ENCODE measurements at regions of chr11 and their contacts with region 1.

Region 1: GRCh38 chr11:11966826-11967668 is 41.4 kb downstream of the DKK3 start:
- DNase-seq: peak; percentile 88
- ATAC-seq: peak; percentile 96
- H3K4me3 Mint-ChIP-seq: no peak overlapping the region
- H3K27ac Mint-ChIP-seq: peak overlapping the region; percentile 20
- H3K4me1 Mint-ChIP-seq: peaks cover 8% of the 10 kb centered on the region
- H3K27me3 Mint-ChIP-seq: peaks cover 11% of the 10 kb centered on the region

Region 2: GRCh38 chr11:11860103-11860979 is 106.7 kb before region 1 on chr11:
- CTCF ChIA-PET with region 1: no interaction called
- POLR2A ChIA-PET with region 1: no interaction called
- DNase-seq: no peak
- ATAC-seq: no peak
- H3K4me3 Mint-ChIP-seq: no peak overlapping the region
- H3K27ac Mint-ChIP-seq: no peak overlapping the region
- H3K4me1 Mint-ChIP-seq: peaks cover 39% of the 10 kb centered on the region
- H3K27me3 Mint-ChIP-seq: no peaks in the 10 kb centered on the region

Region 3: DNA sequence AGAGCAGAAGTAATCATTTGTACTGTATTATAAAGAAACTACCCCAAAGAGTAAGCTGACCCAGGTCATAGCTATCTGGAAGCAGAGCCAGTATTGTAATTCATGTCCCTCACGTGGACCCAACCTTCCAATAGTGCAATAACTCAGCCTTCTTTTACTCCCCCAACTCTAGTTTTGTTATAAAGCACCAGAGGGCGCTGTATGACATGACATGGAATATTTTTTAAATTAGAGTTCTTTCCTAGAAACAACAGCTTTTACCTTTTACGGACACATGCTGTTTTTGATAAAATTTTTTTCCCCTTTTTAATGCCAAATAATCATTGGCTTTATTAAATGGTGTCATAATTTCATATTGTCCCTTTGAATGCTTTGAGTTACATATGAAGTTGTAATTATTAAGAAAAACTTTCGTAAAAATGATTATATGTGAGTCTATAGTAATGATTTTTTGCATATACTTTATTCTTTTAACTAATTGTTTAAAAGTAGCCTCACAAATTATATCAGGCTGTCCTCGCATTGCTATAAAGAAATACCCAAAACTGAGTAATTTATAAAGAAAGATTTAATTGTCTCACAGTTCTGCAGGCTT is 35.5 kb before region 1 on chr11:
- CTCF ChIA-PET with region 1: interaction called, 14 read pairs
- POLR2A ChIA-PET with region 1: no interaction called
- DNase-seq: peak; percentile 27
- ATAC-seq: peak; percentile 49
- H3K4me3 Mint-ChIP-seq: no peak overlapping the region
- H3K27ac Mint-ChIP-seq: no peak overlapping the region
- H3K4me1 Mint-ChIP-seq: peaks cover 6% of the 10 kb centered on the region
- H3K27me3 Mint-ChIP-seq: no peaks in the 10 kb centered on the region

Region 4: GRCh38 chr11:11946180-11946579 is 20.9 kb before region 1 on chr11:
- CTCF ChIA-PET with region 1: interaction called, 17 read pairs
- POLR2A ChIA-PET with region 1: interaction called, 3 read pairs
- DNase-seq: no peak
- ATAC-seq: no peak
- H3K4me3 Mint-ChIP-seq: no peak overlapping the region
- H3K27ac Mint-ChIP-seq: no peak overlapping the region
- H3K4me1 Mint-ChIP-seq: no peaks in the 10 kb centered on the region
- H3K27me3 Mint-ChIP-seq: no peaks in the 10 kb centered on the region

Region 5: GRCh38 chr11:11956006-11956405 is 11.0 kb before region 1 on chr11:
- CTCF ChIA-PET with region 1: interaction called, 18 read pairs
- POLR2A ChIA-PET with region 1: no interaction called
- DNase-seq: no peak
- ATAC-seq: no peak
- H3K4me3 Mint-ChIP-seq: no peak overlapping the region
- H3K27ac Mint-ChIP-seq: no peak overlapping the region
- H3K4me1 Mint-ChIP-seq: peaks cover 27% of the 10 kb centered on the region
- H3K27me3 Mint-ChIP-seq: no peaks in the 10 kb centered on the region

Region 6: GRCh38 chr11:12043959-12044819 is 77.1 kb after region 1 on chr11:
- CTCF ChIA-PET with region 1: interaction called, 13 read pairs
- POLR2A ChIA-PET with region 1: no interaction called
- DNase-seq: peak; percentile 75
- ATAC-seq: peak; percentile 81
- H3K4me3 Mint-ChIP-seq: no peak overlapping the region
- H3K27ac Mint-ChIP-seq: no peak overlapping the region
- H3K4me1 Mint-ChIP-seq: peaks cover 10% of the 10 kb centered on the region
- H3K27me3 Mint-ChIP-seq: peaks cover 6% of the 10 kb centered on the region